ENCODE measurements at regions of chr12 and their contacts with region 1.

Region 1: DNA sequence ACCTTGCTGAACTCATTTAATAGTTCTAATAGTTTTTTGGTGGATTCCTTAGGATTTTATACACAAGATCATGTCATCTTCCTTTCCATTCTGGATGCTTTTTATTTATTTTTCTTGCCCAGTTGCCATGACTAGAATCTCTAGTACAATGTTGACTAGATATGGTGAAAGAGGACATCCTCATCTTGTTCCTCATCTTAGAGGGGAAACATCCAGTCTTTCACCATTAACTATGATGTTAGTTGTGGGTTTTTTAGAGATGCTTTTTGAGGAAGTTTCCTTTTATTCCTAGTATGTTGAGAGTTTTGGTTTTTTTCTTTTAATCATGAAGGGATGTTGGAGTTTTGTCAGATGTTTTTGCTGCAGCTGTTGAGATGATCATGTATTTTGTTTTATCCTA is 8.7 kb downstream of the ANKRD13A start:
- DNase-seq: no peak
- H3K4me3 Mint-ChIP-seq: no peak overlapping the region
- H3K27ac Mint-ChIP-seq: no peak overlapping the region
- H3K4me1 Mint-ChIP-seq: peaks cover 18% of the 10 kb centered on the region
- H3K27me3 Mint-ChIP-seq: no peaks in the 10 kb centered on the region
- CTCF ChIP-seq: no peak

Region 2: DNA sequence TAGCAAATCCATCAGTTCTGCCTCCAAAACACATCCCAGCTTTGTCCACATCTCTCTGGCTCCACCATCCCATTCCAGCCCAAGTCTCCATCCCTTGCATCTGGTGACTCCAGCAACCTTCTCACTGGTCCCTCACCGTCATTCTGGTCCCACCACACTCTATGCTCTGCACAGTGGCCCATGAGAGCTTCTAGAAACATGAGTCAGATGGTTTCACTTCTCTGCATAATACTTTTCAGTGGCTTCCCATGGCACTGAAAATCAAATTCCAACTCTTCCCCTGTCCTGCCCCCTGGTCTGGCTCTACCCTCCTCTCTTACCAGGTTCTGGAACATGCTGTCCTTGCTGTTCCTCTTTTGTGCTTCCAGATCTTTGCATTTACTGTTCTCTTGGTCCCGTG is 57.7 kb after region 1 on chr12:
- CTCF ChIA-PET with region 1: no interaction called
- intact Hi-C with region 1: loop called (anchors 2 kb)
- DNase-seq: no peak
- H3K4me3 Mint-ChIP-seq: no peak overlapping the region
- H3K27ac Mint-ChIP-seq: no peak overlapping the region
- H3K4me1 Mint-ChIP-seq: peaks cover 1% of the 10 kb centered on the region
- H3K27me3 Mint-ChIP-seq: peaks cover 16% of the 10 kb centered on the region
- CTCF ChIP-seq: no peak